Common myeloid progenitor, CD34-positive (primary cell): ENCODE measurements at regions of chr10 and their contacts with region 1.

Region 1: GRCh38 chr10:80464557-80465450 is 10.7 kb downstream of the TSPAN14 start:
- DNase-seq: no peak
- H3K4me3 ChIP-seq: no peak overlapping the region
- H3K27ac ChIP-seq: peak overlapping the region in 1 of 2 experiments; percentile 50
- H3K4me1 ChIP-seq: peaks cover 28 to 91% (median 83%) of the 10 kb centered on the region in 4 experiments
- H3K27me3 ChIP-seq: no peaks in the 10 kb centered on the region

Region 2: GRCh38 chr10:80477813-80478212 is 13.0 kb after region 1 on chr10:
- CTCF ChIA-PET with region 1: interaction called, 15 read pairs
- POLR2A ChIA-PET with region 1: interaction called, 3 read pairs
- DNase-seq: no peak
- H3K4me3 ChIP-seq: no peak overlapping the region
- H3K27ac ChIP-seq: no peak overlapping the region
- H3K4me1 ChIP-seq: no peaks in the 10 kb centered on the region
- H3K27me3 ChIP-seq: no peaks in the 10 kb centered on the region

Region 3: GRCh38 chr10:80487791-80488538 is 23.2 kb after region 1 on chr10:
- CTCF ChIA-PET with region 1: interaction called, 21 read pairs
- POLR2A ChIA-PET with region 1: interaction called, 4 read pairs
- DNase-seq: peak; percentile 39 to 87 (median 81)
- H3K4me3 ChIP-seq: peak overlapping the region in 1 of 7 experiments; percentile 32
- H3K27ac ChIP-seq: peak overlapping the region in 1 of 2 experiments; percentile 54
- H3K4me1 ChIP-seq: peaks cover 22 to 69% (median 57%) of the 10 kb centered on the region in 4 experiments
- H3K27me3 ChIP-seq: no peaks in the 10 kb centered on the region